B cell (primary cell): ENCODE measurements at regions of chr11 and their contacts with region 1.

Region 1: DNA sequence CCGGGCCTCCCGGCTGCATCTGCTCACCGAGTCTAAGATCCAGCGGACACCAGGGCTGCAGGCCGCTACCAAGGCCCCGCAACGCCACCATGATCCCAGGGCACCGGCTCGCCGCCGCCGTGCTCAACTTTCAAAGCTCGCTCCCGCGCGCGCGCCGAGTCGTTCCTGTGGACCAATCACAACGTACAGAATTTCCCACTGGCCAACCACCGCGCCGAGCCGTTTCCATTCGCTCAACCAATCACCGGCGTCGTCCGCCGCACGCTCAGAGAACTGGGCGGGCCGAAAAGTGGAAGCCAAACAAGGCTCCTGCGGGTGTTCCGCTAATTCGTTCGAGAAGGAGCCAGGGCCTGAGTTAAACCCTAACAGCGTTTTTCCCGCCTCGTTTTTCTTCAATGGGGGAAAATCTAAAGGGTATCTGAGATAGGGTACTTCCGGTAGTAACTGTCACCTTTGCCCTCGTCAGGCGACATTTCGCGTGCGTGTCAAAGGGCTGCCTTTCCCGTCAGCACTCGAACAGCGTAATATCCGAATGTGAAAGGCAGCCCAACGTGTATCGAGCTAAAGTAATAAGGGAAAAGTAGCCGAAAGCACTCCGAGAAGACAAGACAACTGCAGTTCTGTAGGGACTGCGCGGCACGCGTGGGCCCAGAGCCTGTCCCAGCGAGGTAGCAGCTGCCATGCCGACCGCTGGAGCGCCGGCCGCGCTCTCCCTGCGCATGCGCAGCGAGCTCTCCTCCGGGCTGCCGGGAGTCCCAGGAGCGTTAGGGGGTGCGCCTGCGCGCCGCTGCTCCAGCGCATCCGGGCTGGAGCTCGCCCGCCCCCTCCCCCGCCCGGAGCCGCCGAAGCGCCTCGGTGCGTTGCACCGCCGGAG is at the starts of genes NCAPD3 and VPS26B:
- DNase-seq: peak; percentile 97
- ATAC-seq: peak; percentile 76
- H3K4me3 ChIP-seq: peak within 1 kb of the TSS; percentile 74 to 98 (median 96)
- H3K4me3 Mint-ChIP-seq: peak within 1 kb of the TSS; percentile 96
- H3K27ac ChIP-seq: peak within 1 kb of the TSS; percentile 90 to 91
- H3K27ac Mint-ChIP-seq: peak within 1 kb of the TSS; percentile 97
- H3K4me1 ChIP-seq: peaks cover 34 to 44% of the 10 kb centered on the region in 2 donors
- H3K4me1 Mint-ChIP-seq: peaks cover 47% of the 10 kb centered on the region
- H3K27me3 ChIP-seq: peaks cover 0 to 25% (median 15%) of the 10 kb centered on the region in 4 experiments
- H3K27me3 Mint-ChIP-seq: peaks cover 15% of the 10 kb centered on the region
- CTCF ChIP-seq: no peak
- total RNA-seq, gene NCAPD3: 32.2 and 34.2 TPM in 2 replicates
- total RNA-seq, gene VPS26B: 35.3 and 38.5 TPM in 2 replicates

Region 2: DNA sequence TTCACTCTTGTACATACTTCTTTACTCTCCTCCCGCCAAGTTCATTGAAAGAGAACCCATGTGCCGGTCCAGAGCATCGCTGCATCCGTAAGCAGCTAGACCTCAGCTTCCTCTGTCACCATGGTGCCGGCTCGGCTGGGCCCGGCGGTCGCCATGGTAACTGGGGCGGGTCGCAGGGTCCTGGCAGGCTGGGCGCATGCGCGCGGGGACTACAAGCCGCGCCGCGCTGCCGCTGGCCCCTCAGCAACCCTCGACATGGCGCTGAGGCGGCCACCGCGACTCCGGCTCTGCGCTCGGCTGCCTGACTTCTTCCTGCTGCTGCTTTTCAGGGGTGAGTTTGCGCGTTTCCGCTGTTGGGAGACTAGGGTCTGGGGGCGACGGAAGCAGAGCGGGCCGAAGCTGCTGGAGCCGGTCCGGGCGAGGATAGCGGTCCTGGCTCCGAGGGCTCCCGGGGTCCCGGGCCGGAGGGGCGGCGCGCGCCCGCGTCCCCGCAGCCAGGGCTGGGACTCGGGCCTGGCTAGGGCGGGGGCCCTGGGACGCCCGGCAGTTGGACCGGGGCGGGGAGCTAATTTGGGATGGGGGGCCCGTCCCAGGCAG is 155.1 kb before region 1 on chr11 and contains the start of gene JAM3:
- CTCF ChIA-PET with region 1: no interaction called
- POLR2A ChIA-PET with region 1: no interaction called
- intact Hi-C with region 1: loop called (anchors 1 kb)
- DNase-seq: peak; percentile 98
- ATAC-seq: peak; percentile 85
- H3K4me3 ChIP-seq: peak within 1 kb of the TSS in 4 of 5 experiments; percentile 40 to 75 (median 66)
- H3K4me3 Mint-ChIP-seq: peak within 1 kb of the TSS; percentile 92
- H3K27ac ChIP-seq: peak within 1 kb of the TSS in 1 of 2 donors; percentile 78
- H3K27ac Mint-ChIP-seq: peak within 1 kb of the TSS; percentile 90
- H3K4me1 ChIP-seq: peaks cover 21 to 32% of the 10 kb centered on the region in 2 donors
- H3K4me1 Mint-ChIP-seq: peaks cover 42% of the 10 kb centered on the region
- H3K27me3 ChIP-seq: no peaks in the 10 kb centered on the region
- H3K27me3 Mint-ChIP-seq: peaks cover 13% of the 10 kb centered on the region
- CTCF ChIP-seq: no peak
- total RNA-seq, gene JAM3: 28.0 and 29.6 TPM in 2 replicates

Region 3: GRCh38 chr11:134244655-134245054 is 20.6 kb after region 1 on chr11:
- CTCF ChIA-PET with region 1: interaction called, 32 read pairs
- POLR2A ChIA-PET with region 1: interaction called, 3 read pairs
- intact Hi-C with region 1: loop called (anchors 1 kb)
- DNase-seq: peak; percentile 66
- ATAC-seq: peak; percentile 84
- H3K4me3 ChIP-seq: no peak overlapping the region
- H3K4me3 Mint-ChIP-seq: no peak overlapping the region
- H3K27ac ChIP-seq: no peak overlapping the region
- H3K27ac Mint-ChIP-seq: no peak overlapping the region
- H3K4me1 ChIP-seq: no peaks in the 10 kb centered on the region
- H3K4me1 Mint-ChIP-seq: no peaks in the 10 kb centered on the region
- H3K27me3 ChIP-seq: no peaks in the 10 kb centered on the region
- H3K27me3 Mint-ChIP-seq: no peaks in the 10 kb centered on the region
- CTCF ChIP-seq: peak; percentile 77